Gastrocnemius medialis (tissue), 4 donors: ENCODE measurements at regions of chr12 and their contacts with region 1.

Region 1: DNA sequence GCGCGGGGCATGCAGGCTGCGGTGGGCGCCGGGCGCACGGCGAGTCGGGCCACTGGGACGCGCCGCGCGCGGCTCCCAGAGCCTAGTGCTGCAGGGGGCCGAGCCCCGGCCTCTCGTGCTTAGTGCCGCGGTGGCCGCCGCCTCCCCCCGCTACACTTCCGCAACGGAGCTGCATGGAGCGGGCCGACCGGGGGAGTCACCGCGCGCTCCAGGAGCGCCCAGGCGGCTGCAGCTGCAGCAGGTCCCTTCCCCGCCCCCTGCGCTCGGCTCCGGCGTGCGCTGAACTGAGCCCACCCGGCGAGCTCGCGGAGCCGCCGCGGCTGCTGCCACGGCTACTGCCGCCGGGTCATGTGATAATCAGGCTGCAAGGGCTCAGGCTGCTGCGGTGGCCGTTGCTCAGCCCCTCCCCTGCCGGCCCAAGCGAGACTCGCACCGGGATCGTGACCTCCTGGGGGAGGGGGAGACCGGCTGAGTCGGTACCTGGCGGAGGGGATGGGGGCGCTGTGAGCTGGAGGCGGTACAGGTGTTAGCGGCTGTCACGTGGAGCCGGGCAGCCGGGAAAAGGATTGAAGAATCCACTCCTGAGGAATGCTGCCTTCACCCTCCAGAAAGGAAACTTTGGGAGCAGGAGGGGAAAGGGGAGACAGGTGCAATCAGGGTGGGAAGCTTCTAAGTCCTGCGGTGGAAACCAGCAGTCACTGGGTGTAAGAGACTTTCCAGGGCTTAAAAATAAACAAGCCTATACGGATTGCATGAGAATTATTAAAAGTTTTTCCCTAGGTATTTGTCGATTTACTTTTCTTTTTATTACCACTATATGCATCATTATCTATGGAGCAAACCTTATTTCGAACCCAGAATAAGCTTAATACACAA is at the start of gene PPM1H:
- DNase-seq: peak; percentile 50 to 68
- ATAC-seq: peak; percentile 72
- H3K4me3 ChIP-seq: peak within 1 kb of the TSS; percentile 64 to 92 (median 72)
- H3K27ac ChIP-seq: peak within 1 kb of the TSS; percentile 27 to 87 (median 66)
- H3K4me1 ChIP-seq: peaks cover 5 to 6% of the 10 kb centered on the region in 2 donors
- H3K27me3 ChIP-seq: no peaks in the 10 kb centered on the region
- CTCF ChIP-seq: peak; percentile 25 to 59 (median 52)
- POLR2A ChIP-seq: peak in 1 of 2 donors; percentile 60
- total RNA-seq, gene PPM1H: 0.46 to 3.4 (median 1.3) TPM

Region 2: DNA sequence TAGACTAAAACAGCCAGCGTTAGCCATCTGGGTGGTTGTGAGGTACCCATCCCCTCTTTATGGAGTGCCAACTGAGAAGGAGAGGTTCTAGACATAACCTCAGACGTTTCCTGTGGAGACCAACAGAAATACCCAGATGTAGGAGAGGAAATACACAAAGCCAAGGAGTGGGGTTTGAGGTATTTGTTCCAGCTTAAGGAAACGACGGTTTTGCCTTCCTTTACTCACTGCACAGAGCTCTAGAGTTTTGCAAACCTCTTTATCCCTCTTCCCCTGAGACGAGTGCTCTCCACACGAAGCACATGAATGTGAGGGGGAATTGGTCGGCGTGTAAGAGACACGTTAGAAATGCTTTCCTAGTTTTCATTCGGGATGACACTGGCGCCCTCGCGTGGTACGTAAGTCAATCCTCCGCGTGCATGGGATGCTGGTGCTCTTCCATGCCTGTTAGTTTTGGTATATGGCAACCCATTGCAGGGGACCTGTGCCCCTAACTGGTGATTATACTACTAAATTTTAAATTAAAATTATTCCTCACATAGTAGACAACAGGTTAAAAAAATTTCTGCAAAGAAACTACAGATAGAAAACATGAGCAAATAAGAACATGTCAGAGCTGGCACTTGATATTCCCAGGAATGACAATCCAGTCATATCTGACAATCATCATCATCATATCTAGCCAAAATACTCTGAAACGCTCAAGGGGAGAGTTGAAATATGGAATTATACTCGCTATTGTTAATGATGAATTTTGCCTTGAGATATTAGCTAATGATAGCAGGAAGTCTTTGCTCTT is 121.8 kb before region 1 on chr12:
- in situ Hi-C with region 1: no loop called
- intact Hi-C with region 1: loop called (anchors 10 kb)
- DNase-seq: no peak
- ATAC-seq: peak; percentile 52 to 71
- H3K4me3 ChIP-seq: peak overlapping the region in 3 of 4 donors; percentile 16 to 33 (median 29)
- H3K27ac ChIP-seq: no peak overlapping the region
- H3K4me1 ChIP-seq: peaks cover 5 to 7% of the 10 kb centered on the region in 2 donors
- H3K27me3 ChIP-seq: no peaks in the 10 kb centered on the region
- CTCF ChIP-seq: peak in 2 of 5 experiments; percentile 59 to 67
- POLR2A ChIP-seq: no peak

Region 3: DNA sequence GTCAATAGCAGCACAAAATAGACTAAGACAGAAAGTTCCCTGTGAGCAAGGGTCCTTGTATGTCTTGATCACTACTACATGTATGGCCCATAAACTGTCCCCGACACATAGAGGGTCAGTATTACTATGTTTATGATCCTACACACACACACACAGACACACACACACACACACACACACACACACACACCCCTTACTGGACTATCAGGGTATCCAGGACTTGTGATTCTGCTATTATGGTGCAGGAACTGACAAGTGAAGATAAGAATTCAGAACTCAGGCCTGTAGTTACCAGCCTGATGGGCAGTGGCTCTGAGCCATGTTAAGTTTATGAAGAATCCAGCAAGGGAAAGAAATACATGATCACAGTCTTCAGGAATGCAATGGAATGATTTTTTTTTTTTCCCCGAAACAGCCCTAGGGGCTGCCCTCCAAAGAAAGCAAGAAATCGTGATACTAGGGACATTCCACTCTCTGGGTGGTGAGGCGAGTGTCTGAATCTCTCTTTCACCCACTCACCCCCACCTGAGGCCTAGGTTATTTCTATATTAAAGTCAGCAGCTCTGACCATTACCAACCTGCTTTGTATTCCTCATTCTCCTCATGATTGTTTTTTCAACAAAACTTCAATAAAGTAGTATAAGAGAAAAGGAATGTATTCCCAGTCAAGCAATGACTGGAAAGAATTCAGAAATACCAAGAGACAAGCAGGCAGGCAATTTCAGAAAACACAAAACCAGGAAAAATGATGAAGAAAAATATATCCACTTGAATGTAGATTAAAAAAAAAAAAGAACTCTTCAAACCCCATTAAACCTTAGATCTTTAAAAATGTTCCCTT is 110.2 kb after region 1 on chr12:
- in situ Hi-C with region 1: loop called in 1 of 4 experiments (anchors 25 kb)
- intact Hi-C with region 1: no loop called
- DNase-seq: no peak
- ATAC-seq: no peak
- H3K4me3 ChIP-seq: no peak overlapping the region
- H3K27ac ChIP-seq: no peak overlapping the region
- H3K4me1 ChIP-seq: no peaks in the 10 kb centered on the region
- H3K27me3 ChIP-seq: no peaks in the 10 kb centered on the region
- CTCF ChIP-seq: no peak
- POLR2A ChIP-seq: no peak

Region 4: GRCh38 chr12:63138488-63138887 is 203.5 kb after region 1 on chr12:
- in situ Hi-C with region 1: no loop called
- intact Hi-C with region 1: no loop called
- DNase-seq: no peak
- ATAC-seq: no peak
- H3K4me3 ChIP-seq: no peak overlapping the region
- H3K27ac ChIP-seq: no peak overlapping the region
- H3K4me1 ChIP-seq: no peaks in the 10 kb centered on the region
- H3K27me3 ChIP-seq: no peaks in the 10 kb centered on the region
- CTCF ChIP-seq: no peak
- POLR2A ChIP-seq: no peak